ENCODE measurements at regions of chr14 and their contacts with region 1.

Region 1: DNA sequence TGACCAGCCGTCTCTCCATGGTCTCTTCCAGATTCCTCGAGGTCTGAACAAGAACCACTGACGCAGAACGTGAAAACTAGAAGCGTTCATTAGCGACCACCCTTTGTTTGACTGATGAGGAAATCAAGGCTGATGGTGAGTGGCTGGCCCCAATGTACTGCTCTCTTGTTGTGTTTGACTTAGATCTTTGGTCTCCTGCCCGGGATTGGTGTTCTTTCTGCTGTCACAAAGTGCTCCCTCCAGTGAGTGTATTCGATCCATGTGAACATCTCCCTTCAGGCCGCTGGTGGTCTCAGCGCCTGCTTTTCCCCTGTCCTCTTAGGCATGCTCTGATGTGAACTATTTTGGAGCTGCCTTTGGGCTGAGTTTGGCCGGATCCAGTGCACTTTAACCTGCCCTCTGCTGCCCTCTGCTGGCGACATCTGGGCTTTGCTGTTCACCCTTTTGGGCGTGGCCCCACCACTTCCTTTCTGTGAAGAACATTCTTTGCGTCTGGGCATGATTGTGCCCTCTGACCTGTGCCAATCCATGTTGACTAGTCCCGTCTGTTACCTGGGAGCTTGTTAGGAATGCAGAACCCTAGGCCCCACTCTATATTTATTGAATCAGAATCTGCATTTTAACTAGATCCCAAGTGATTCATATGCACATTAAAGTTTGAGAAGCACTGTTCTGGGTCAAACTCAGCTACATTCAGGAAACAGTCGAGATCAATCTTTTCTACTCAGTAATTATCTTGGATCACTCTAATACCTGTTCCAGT is 279.2 kb downstream of the TTC6 start:
- DNase-seq: peak; percentile 92
- ATAC-seq: peak; percentile 90
- H3K4me3 ChIP-seq: no peak overlapping the region
- H3K27ac ChIP-seq: no peak overlapping the region
- H3K4me1 ChIP-seq: peaks cover 17% of the 10 kb centered on the region; the same call in 1 of the 2 replicates
- H3K27me3 ChIP-seq: no peaks in the 10 kb centered on the region
- CTCF ChIP-seq: peak; percentile 95

Region 2: DNA sequence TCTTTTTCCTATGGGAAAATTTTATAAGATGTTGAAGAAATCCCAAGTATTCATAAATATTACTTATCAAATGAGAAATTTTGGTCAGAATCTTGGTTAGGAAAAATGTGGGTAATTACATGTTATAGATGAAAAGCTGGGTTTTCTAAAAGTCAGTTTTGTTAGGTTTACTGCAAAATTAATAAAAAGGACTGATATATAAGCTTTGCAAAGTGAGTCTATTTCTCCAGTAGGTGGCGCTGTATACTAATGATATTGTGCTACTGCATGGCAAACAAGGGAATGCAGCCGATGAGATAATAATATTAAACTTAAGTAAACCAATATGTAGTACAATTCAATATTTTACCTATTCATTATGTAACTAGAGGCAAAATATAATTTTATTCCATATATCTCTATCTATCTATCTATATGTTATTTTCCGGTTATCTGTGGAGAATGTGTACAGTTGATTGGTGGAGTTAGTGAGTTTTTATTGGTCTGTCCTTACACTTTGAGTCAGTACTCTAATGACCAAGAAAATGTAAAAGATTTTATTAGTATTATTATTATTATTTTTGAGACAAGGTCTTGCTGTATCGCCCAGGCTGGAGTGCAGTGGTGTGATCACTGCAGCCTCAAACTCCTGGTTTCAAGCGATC is 643.9 kb before region 1 on chr14:
- CTCF ChIA-PET with region 1: no interaction called
- POLR2A ChIA-PET with region 1: no interaction called
- intact Hi-C with region 1: loop called (anchors 5 kb)
- DNase-seq: peak; percentile 89
- ATAC-seq: peak; percentile 80
- H3K4me3 ChIP-seq: no peak overlapping the region
- H3K27ac ChIP-seq: no peak overlapping the region
- H3K4me1 ChIP-seq: no peaks in the 10 kb centered on the region
- H3K27me3 ChIP-seq: no peaks in the 10 kb centered on the region
- CTCF ChIP-seq: peak; percentile 93

Region 3: GRCh38 chr14:37529638-37530037 is 345.0 kb before region 1 on chr14:
- CTCF ChIA-PET with region 1: no interaction called
- POLR2A ChIA-PET with region 1: no interaction called
- intact Hi-C with region 1: no loop called
- DNase-seq: no peak
- ATAC-seq: no peak
- H3K4me3 ChIP-seq: no peak overlapping the region
- H3K27ac ChIP-seq: no peak overlapping the region
- H3K4me1 ChIP-seq: no peaks in the 10 kb centered on the region
- H3K27me3 ChIP-seq: no peaks in the 10 kb centered on the region
- CTCF ChIP-seq: no peak

Region 4: DNA sequence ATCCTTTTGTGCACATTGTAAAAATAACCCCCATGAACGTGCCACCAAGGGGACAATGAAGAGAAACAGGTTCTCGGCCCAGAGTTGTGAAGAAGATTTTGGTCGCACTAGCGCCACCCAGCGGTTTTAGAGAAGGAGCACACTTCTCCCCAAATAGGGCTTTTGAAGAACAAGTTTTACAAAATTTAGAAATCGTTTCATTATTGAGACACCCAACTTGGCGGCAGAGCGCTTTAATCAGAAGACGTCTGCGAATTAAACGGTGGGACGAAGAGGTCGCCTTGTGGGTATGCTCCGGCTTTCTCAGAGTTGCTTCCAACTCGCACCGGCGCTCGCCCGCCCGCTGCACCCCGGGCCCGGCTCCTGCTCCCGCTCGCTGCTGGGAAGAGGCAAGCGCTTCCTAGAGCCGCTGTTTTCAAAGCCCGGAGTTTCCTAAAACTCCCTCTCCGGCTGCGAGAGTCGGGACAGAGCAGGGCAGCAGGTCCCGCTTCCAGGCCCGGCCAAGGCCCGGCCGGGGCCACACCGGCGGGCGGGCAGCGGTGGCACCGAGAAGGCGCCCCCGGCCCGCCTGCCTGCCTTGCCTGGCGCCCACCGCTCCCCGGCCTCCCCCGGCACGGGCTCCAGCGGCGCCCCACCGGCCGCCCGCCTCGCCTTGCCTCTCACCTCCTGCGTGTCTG is 280.2 kb before region 1 on chr14:
- CTCF ChIA-PET with region 1: interaction called, 4 read pairs
- POLR2A ChIA-PET with region 1: interaction called, 4 read pairs
- intact Hi-C with region 1: loop called (anchors 1 kb)
- DNase-seq: peak; percentile 92
- ATAC-seq: no peak
- H3K4me3 ChIP-seq: peak overlapping the region; percentile 96
- H3K27ac ChIP-seq: peak overlapping the region; percentile 99
- H3K4me1 ChIP-seq: peaks cover 28% of the 10 kb centered on the region
- H3K27me3 ChIP-seq: no peaks in the 10 kb centered on the region
- CTCF ChIP-seq: peak; percentile 92

Region 5: DNA sequence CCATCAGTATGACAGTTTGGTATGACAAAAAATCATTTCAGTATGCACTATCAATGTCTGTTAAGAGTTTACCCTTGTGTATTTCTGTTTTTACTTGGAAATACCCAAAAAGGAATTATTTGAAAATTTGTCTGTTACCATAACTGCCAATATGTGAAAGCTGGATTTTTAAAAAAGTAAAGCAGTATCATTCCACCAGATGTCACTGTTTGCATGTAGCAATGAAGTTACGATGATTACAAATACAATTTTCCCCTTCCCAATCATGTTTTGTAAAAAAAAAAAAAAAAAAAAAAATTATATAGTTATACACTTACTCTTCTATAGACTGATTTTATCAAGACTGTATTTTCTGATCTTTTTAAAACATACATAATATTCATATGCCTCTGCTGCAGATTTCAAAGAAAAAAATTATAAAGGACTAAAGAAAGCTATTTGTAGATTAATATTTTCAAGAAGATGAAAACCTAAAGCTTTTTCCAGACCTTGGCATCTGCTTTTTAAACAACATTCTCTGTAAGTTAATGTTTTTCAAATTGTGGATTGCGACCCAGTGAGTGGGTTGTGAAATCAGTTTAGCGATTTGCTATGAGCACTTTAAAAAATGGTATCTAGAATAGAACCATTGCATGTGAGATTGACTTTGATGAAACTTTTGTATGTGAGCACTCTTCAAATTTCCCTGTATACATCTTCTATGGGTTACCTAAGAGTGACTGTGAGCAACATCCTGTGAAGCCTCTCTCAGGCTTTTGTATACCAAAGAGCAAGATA is 165.0 kb before region 1 on chr14:
- CTCF ChIA-PET with region 1: interaction called, 15 read pairs
- POLR2A ChIA-PET with region 1: no interaction called
- intact Hi-C with region 1: loop called (anchors 1 kb)
- DNase-seq: peak; percentile 63
- ATAC-seq: no peak
- H3K4me3 ChIP-seq: no peak overlapping the region
- H3K27ac ChIP-seq: no peak overlapping the region
- H3K4me1 ChIP-seq: peaks cover 20% of the 10 kb centered on the region
- H3K27me3 ChIP-seq: no peaks in the 10 kb centered on the region
- CTCF ChIP-seq: peak; percentile 62

Region 6: GRCh38 chr14:37796703-37797416 is 77.8 kb before region 1 on chr14:
- CTCF ChIA-PET with region 1: no interaction called
- POLR2A ChIA-PET with region 1: no interaction called
- intact Hi-C with region 1: no loop called
- DNase-seq: peak; percentile 36
- ATAC-seq: peak; percentile 53
- H3K4me3 ChIP-seq: no peak overlapping the region
- H3K27ac ChIP-seq: no peak overlapping the region
- H3K4me1 ChIP-seq: peaks cover 9% of the 10 kb centered on the region
- H3K27me3 ChIP-seq: no peaks in the 10 kb centered on the region
- CTCF ChIP-seq: no peak

Region 7: GRCh38 chr14:37824939-37825712 is 49.5 kb before region 1 on chr14:
- CTCF ChIA-PET with region 1: no interaction called
- POLR2A ChIA-PET with region 1: no interaction called
- intact Hi-C with region 1: loop called (anchors 2 kb)
- DNase-seq: peak; percentile 55
- ATAC-seq: peak; percentile 66
- H3K4me3 ChIP-seq: no peak overlapping the region
- H3K27ac ChIP-seq: peak overlapping the region; percentile 10
- H3K4me1 ChIP-seq: peaks cover 33% of the 10 kb centered on the region
- H3K27me3 ChIP-seq: no peaks in the 10 kb centered on the region
- CTCF ChIP-seq: no peak